ENCODE measurements at regions of chr9 and their contacts with region 1.

Region 1: DNA sequence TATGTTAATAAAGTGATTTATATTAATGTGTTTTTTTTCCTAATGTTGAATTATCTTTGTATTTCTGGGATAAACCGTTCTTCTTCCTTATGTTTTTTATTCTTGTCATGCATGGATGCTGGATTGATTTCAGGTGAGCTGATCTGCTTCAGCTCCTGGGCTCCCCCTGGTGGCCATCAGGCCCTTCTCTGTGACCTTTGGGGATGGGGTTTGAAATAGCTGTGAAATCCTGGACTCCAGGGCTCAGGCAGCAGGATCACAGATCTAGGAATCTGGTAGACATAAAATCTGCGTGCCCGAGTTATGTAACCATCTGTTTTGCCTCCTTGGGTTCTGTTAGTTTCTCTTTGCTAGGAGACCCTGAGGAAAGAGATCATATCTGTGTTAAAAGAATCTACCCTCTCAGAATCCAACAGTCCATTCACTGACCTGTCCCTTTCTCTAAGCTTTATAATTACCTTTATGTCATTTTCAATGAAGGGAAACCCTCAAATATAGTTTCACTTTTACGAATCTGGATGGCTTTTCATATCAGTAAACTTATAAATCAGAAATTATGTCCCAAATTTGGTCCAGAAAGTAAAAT is 12.2 kb upstream of the OR13J1 start:
- DNase-seq: peak; percentile 76
- CTCF ChIP-seq: peak; percentile 91

Region 2: DNA sequence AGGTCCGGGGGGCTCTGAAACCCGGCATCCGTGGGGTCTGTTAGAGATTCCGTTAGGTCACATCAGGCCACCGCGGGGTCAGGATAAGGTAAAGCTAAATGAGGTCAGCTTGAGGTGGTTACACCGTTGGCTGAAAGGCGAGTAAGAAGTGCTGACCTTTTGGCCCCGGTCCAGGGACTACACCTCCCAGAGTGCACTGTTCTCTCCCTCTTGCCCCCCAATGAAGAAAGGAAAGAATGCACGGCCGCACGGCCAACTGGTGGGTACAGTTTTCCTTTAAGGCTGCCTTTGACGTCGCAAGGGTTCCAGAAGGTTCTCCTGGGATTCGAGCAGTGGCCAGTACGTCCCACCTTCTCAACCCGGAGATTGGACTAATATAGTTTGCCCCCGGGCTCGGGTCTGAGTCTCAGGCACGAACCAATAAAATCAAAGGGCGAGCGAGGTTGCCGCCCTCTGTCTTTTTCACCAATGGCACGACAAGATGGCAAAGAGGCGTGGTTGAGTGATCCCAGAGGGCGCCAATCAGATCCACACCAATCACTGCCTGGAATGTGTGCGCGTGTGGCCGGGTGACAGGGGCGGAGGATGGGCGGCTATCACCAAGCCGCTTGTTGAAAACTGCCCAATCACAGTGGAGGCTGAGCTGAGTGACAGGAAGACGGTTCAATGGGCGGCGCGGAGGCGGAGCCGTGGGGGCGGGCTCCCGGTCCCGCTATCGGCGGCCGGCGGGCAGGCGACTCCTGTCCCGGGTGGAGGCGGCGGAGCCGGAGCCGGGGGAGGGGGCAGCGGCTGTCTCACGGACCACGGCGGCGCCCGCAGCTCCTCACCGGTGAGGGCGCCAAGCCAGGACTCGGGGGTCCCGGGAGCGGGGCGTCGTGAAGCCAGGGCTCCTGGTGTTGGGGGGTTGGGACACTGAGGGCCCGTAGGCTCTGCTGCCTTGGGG is 893.1 kb before region 1 on chr9 and contains the start of gene DNAJB5:
- in situ Hi-C with region 1: no loop called
- DNase-seq: peak; percentile 98
- CTCF ChIP-seq: no peak

Region 3: DNA sequence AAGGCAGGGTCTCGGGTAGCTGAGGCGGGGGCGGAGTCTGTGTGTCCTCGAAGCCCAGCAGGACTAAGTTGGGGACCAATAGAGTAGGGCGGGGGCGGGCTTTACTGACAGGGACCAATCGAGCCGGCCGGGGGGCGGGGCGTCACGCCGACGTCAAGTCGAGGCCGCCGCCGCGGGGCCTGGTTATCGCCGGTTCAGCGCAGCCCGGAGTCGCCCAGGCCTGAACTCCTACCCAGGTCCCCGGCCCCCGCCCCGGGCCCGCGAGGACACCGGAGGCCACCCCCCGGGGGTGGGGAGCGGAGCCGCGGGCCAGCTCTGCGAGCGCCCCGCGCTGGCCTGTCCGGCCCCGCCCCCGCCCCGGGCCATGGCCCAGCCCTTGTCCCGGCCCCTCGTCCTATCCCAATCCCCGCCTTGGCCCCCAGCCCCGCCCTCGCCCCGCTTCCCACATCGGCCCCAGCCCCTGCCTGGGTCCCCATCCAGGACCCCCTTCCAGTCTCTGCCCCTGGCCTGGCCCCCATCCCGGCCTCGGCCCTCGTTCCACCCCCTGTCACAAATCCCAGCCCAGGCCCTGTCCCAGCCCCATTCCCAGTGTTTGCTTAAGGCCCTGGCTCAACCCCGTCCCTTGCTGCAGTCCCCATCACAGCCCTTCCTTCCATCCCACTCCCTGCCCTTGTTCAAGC is 53.1 kb before region 1 on chr9 and contains the start of gene TMEM8B:
- in situ Hi-C with region 1: loop called (anchors 10 kb)
- DNase-seq: peak; percentile 96
- CTCF ChIP-seq: no peak